Activated naive CD4-positive, alpha-beta T cell treated with anti-CD3 and anti-CD28 coated beads for 36 hours (primary cell): ENCODE measurements at regions of chr5 and their contacts with region 1.

Region 1: GRCh38 chr5:98928873-98929696 is at the start of gene CHD1:
- DNase-seq: peak; percentile 97
- H3K4me3 Mint-ChIP-seq: peak within 1 kb of the TSS; percentile 93
- H3K27ac Mint-ChIP-seq: peak within 1 kb of the TSS; percentile 100
- H3K4me1 Mint-ChIP-seq: peaks cover 57% of the 10 kb centered on the region
- H3K27me3 Mint-ChIP-seq: no peaks in the 10 kb centered on the region
- total RNA-seq, gene CHD1: 50.5 to 52.1 TPM

Region 2: DNA sequence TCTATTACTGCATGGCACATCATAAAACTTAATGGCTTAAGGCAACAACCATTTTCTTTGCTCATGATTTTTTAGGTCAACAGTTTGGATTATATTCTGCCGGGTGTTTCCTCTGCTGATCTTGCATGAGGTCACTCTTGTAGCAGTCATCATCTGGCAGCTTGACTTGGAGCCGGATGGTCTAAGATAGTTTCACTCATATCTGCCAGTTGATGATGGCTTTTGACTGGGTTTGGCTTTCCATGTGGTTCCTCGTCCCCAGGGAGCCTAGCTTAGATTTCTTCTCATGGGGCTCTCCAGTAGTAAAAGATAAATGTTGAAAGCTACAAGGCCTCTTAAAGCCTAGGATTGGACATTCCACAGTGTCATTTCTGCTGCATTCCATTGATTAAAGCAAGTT is 1965.8 kb before region 1 on chr5:
- CTCF ChIA-PET with region 1: no interaction called
- intact Hi-C with region 1: loop called (anchors 2 kb)
- DNase-seq: peak; percentile 47
- H3K4me3 Mint-ChIP-seq: peak overlapping the region; percentile 69
- H3K27ac Mint-ChIP-seq: peak overlapping the region; percentile 95
- H3K4me1 Mint-ChIP-seq: peaks cover 73% of the 10 kb centered on the region
- H3K27me3 Mint-ChIP-seq: no peaks in the 10 kb centered on the region

Region 3: GRCh38 chr5:97183100-97183929 is 1745.8 kb before region 1 on chr5 and contains the start of gene RIOK2:
- CTCF ChIA-PET with region 1: no interaction called
- intact Hi-C with region 1: loop called (anchors 1 kb)
- DNase-seq: peak; percentile 97
- H3K4me3 Mint-ChIP-seq: peak within 1 kb of the TSS; percentile 93
- H3K27ac Mint-ChIP-seq: peak within 1 kb of the TSS; percentile 99
- H3K4me1 Mint-ChIP-seq: peaks cover 33% of the 10 kb centered on the region
- H3K27me3 Mint-ChIP-seq: no peaks in the 10 kb centered on the region
- total RNA-seq, gene RIOK2: 29.1 to 32.0 TPM

Region 4: DNA sequence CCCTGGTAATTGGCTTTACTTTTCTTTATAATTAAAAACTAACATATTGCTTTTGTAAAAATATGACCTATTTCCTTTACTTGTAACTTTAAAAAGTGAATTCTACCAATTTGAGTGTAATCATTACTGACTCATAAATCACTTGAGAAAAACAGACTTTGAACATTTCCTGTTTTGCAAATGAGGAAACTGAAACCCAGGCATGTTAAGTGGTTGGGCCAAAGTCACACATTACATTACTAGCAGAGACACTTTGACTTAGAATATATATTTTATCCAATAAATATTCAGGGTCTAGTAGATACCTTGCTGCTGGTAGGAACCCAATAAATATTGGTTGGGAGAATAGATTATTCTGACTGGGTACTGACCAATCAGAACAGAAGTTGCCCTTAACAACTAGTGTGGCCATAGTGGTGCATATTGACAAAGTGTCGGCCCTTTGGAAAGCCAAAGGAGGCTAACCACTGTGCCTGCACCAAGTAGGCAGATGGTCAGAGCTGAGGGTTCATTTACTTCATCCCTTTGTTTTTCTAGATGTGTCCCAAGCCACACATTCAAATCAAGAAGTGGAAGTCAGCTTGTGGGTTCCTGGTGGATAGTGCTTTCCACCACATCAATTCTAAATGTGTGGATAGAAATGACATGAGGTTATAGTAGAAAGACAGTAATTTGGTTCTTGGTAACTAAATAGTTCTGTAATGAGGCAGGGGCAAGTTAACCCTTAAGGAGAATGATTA is 1380.9 kb before region 1 on chr5:
- CTCF ChIA-PET with region 1: no interaction called
- intact Hi-C with region 1: loop called (anchors 10 kb)
- DNase-seq: peak; percentile 11
- H3K4me3 Mint-ChIP-seq: no peak overlapping the region
- H3K27ac Mint-ChIP-seq: peak overlapping the region; percentile 6
- H3K4me1 Mint-ChIP-seq: peaks cover 18% of the 10 kb centered on the region
- H3K27me3 Mint-ChIP-seq: peaks cover 3% of the 10 kb centered on the region

Region 5: GRCh38 chr5:98872674-98873073 is 56.4 kb before region 1 on chr5:
- CTCF ChIA-PET with region 1: no interaction called
- intact Hi-C with region 1: no loop called
- DNase-seq: no peak
- H3K4me3 Mint-ChIP-seq: no peak overlapping the region
- H3K27ac Mint-ChIP-seq: no peak overlapping the region
- H3K4me1 Mint-ChIP-seq: peaks cover 4% of the 10 kb centered on the region
- H3K27me3 Mint-ChIP-seq: no peaks in the 10 kb centered on the region

Region 6: DNA sequence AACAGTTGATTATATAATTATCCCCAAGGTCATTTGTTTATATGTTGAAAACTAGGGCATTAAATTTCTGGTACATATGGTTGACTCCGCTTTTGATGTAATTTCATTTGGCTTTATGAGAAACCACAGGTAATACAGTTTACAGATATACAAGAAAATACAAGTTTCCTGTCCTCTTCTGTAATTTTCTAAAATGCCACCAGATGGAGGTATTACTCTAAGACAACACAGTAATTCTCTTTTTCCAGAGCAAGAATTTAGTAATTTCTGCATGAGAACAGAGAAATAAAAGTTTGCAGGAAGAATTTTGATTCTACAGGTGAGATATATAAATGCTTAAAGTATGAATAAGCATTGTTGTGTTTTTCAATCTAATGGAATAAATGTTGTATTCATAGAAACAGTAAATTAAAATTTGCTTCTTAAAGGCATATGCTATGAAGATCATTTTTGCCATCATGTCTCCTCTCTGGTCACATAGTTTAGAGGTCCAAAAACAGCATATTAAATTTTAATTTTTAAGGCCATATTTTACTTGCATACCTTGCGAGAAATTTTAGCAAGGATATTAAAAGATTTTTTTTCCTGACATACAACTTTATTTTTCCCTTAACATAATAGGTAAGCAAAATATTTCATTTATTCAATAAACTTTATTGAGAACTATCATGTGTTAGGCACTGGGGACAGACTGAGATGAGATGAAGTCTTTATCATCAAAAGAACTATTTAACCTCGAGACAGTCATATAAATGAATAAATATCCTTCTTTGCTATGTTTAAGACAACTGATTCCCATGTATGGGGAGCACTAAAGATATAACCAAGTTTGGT is 23.0 kb before region 1 on chr5:
- CTCF ChIA-PET with region 1: interaction called, 4 read pairs
- intact Hi-C with region 1: loop called (anchors 1 kb)
- DNase-seq: no peak
- H3K4me3 Mint-ChIP-seq: no peak overlapping the region
- H3K27ac Mint-ChIP-seq: no peak overlapping the region
- H3K4me1 Mint-ChIP-seq: peaks cover 43% of the 10 kb centered on the region
- H3K27me3 Mint-ChIP-seq: no peaks in the 10 kb centered on the region

Region 7: GRCh38 chr5:98916540-98916939 is 12.5 kb before region 1 on chr5:
- CTCF ChIA-PET with region 1: interaction called, 3 read pairs
- intact Hi-C with region 1: loop called (anchors 1 kb)
- DNase-seq: no peak
- H3K4me3 Mint-ChIP-seq: no peak overlapping the region
- H3K27ac Mint-ChIP-seq: peak overlapping the region; percentile 36
- H3K4me1 Mint-ChIP-seq: peaks cover 74% of the 10 kb centered on the region
- H3K27me3 Mint-ChIP-seq: no peaks in the 10 kb centered on the region

Region 8: DNA sequence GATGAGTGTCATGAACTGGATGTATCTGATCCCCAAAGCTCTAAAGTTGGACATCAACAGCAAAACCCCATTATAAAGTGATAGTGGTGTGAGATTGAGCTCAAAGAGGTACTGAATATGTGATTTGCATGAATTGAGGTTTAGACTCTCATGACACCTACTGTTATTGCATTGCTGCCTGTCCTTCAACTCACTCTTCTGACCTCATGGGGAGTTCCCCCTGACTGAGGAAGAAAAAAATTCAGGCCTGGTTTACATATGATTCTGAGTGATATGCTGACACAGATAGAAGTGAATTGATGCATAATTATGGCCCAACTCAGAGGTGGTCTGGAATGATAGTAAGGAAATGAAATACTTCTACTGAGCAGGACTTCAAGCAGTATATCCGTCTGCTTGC is 75.9 kb after region 1 on chr5:
- CTCF ChIA-PET with region 1: no interaction called
- intact Hi-C with region 1: loop called (anchors 1 kb)
- DNase-seq: peak; percentile 47
- H3K4me3 Mint-ChIP-seq: no peak overlapping the region
- H3K27ac Mint-ChIP-seq: no peak overlapping the region
- H3K4me1 Mint-ChIP-seq: peaks cover 17% of the 10 kb centered on the region
- H3K27me3 Mint-ChIP-seq: no peaks in the 10 kb centered on the region

Region 9: GRCh38 chr5:99122976-99123375 is 193.9 kb after region 1 on chr5:
- CTCF ChIA-PET with region 1: no interaction called
- intact Hi-C with region 1: no loop called
- DNase-seq: no peak
- H3K4me3 Mint-ChIP-seq: no peak overlapping the region
- H3K27ac Mint-ChIP-seq: no peak overlapping the region
- H3K4me1 Mint-ChIP-seq: no peaks in the 10 kb centered on the region
- H3K27me3 Mint-ChIP-seq: no peaks in the 10 kb centered on the region